BJ (cell line): ENCODE measurements at regions of chr1 and their contacts with region 1.

Region 1: GRCh38 chr1:43073490-43074230 is 98.4 kb downstream of the EBNA1BP2 start:
- DNase-seq: no peak
- H3K4me3 ChIP-seq: no peak overlapping the region
- H3K27me3 ChIP-seq: no peaks in the 10 kb centered on the region
- CTCF ChIP-seq: peak; percentile 73

Region 2: GRCh38 chr1:42777852-42778251 is 295.8 kb before region 1 on chr1:
- CTCF ChIA-PET with region 1: interaction called, 82 read pairs
- POLR2A ChIA-PET with region 1: no interaction called
- DNase-seq: no peak
- H3K4me3 ChIP-seq: no peak overlapping the region
- H3K27me3 ChIP-seq: no peaks in the 10 kb centered on the region
- CTCF ChIP-seq: peak; percentile 79

Region 3: DNA sequence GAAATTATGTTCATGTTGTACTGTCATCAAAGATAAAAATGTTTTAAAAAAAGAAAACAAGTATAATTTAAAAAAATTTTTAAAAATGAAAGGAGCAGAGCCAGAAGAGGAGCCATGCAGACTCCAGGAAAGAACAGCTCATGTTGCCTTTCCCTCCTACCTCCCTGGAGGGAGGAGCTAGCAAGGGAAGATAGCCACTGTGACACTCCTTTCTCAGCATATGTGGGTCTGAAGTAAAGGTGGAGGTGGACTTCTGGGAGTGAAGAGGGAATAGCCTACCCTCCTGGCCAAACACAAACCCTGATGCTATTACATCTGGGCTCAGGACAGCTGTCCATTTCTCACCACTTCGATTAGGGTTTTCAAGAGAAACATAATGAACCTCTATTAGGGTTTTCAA is 169.2 kb before region 1 on chr1:
- CTCF ChIA-PET with region 1: interaction called, 11 read pairs
- POLR2A ChIA-PET with region 1: no interaction called
- DNase-seq: no peak
- H3K4me3 ChIP-seq: no peak overlapping the region
- H3K27me3 ChIP-seq: peaks cover 2% of the 10 kb centered on the region
- CTCF ChIP-seq: no peak

Region 4: GRCh38 chr1:42929434-42930195 is 144.0 kb before region 1 on chr1:
- CTCF ChIA-PET with region 1: interaction called, 474 read pairs
- POLR2A ChIA-PET with region 1: no interaction called
- DNase-seq: no peak
- H3K4me3 ChIP-seq: no peak overlapping the region
- H3K27me3 ChIP-seq: no peaks in the 10 kb centered on the region
- CTCF ChIP-seq: no peak

Region 5: DNA sequence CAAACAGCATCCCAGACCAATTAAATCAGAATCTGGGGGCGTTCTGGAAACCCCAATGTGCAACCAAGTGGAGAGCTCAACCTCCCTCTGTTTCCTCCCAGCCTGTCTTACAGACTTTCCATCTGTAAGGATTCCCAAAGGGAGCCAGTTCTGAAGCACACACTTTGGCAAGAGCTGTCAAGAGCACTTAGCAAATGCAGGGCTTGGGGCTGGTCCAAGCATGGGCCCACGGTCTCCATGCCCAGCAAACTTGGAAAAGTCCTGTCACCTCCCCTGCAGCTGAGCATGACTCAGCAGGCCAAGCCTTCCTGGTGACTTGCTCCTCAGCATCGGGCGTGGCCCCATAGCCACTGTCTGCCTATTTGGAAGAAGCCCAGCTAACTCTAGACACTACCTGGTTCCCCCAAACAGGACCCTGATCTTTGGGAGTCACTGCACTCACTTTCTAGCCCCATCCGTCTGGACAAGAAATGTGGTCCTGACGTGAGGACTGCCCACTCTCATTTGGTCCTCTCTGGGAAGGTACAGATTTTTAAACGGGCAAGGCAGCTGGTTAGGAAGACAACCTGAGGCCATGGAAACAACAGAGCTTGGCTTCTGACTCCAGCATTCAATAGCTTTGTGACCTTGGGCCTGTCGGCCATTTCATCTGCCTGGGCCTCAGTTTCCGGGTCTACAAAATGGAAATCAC is 131.9 kb before region 1 on chr1:
- CTCF ChIA-PET with region 1: interaction called, 24 read pairs
- POLR2A ChIA-PET with region 1: interaction called, 6 read pairs
- DNase-seq: peak; percentile 86
- H3K4me3 ChIP-seq: no peak overlapping the region
- H3K27me3 ChIP-seq: no peaks in the 10 kb centered on the region
- CTCF ChIP-seq: no peak

Region 6: DNA sequence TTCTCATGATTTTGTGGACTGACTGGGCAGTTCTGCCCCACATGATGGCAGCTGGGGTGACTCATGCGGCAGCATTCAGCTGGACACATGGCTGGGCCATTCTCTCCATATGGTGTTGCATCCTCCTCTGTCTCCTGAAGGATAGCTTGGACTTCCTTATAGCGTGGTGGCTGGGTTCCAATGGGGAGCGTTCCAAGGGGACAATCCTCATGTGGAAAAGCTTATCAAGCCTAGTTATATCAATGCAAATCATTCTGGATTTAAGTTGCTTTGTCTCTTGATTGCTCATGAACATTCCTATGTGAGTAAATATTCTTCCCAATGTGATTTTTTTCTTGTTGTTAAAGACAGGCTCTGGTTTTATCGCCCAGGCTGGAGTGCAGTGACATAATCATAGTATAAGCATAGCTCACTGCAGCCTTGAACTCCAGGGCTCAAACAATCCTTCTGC is 101.8 kb before region 1 on chr1:
- CTCF ChIA-PET with region 1: interaction called, 12 read pairs
- POLR2A ChIA-PET with region 1: no interaction called
- DNase-seq: peak; percentile 88
- H3K4me3 ChIP-seq: no peak overlapping the region
- H3K27me3 ChIP-seq: no peaks in the 10 kb centered on the region
- CTCF ChIP-seq: no peak

Region 7: DNA sequence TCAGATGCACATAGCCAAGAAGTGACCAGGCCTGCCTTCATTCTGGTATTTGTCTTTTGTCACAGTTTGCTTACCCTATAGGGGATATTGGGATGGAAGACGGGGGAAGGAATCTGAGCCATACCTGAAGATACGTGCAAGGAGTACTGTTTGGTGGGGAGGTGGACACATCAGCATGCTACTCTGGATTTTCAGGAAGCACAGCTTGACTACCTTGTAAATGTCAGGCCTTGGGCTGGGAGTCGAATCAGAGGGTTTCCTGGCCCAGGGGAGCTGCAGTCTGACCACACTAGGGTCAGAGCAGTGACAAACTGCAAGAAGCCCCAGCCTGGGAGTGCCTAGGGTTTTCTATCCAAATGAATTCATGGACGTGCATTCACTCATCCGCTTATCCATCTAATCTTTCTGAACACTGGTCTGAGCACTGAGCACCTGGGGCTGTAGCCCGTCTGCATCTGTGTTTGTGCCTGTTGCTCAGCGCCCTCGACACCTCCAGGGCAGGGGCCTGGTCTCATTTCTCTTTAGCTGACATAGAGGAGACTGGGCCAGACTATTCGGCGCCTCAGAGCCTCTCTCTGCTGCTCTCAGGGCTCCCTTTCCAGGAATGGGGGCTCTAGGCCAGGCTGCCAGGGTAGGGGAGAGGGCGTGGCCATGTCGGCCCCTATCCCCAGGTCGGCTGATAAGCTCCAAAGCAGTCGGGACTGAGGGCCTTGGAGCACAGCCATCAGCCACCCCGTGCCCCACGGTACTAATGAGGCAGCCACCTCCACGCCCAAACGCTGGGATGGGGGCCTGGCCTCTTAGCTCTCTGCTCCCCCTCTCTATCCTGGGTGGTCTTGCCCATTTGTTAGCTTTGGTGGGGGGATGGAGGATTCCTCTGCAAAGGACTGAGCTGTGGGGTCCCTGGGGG is 68.0 kb before region 1 on chr1:
- CTCF ChIA-PET with region 1: no interaction called
- POLR2A ChIA-PET with region 1: no interaction called
- DNase-seq: no peak
- H3K4me3 ChIP-seq: no peak overlapping the region
- H3K27me3 ChIP-seq: no peaks in the 10 kb centered on the region; the same call in none of the 2 replicates
- CTCF ChIP-seq: no peak

Region 8: GRCh38 chr1:43058545-43059355 is 14.9 kb before region 1 on chr1:
- CTCF ChIA-PET with region 1: interaction called, 24 read pairs
- POLR2A ChIA-PET with region 1: no interaction called
- DNase-seq: no peak
- H3K4me3 ChIP-seq: no peak overlapping the region
- H3K27me3 ChIP-seq: no peaks in the 10 kb centered on the region
- CTCF ChIP-seq: no peak